CD4-positive, alpha-beta T cell (primary cell): ENCODE measurements at regions of chr10 and their contacts with region 1.

Region 1: DNA sequence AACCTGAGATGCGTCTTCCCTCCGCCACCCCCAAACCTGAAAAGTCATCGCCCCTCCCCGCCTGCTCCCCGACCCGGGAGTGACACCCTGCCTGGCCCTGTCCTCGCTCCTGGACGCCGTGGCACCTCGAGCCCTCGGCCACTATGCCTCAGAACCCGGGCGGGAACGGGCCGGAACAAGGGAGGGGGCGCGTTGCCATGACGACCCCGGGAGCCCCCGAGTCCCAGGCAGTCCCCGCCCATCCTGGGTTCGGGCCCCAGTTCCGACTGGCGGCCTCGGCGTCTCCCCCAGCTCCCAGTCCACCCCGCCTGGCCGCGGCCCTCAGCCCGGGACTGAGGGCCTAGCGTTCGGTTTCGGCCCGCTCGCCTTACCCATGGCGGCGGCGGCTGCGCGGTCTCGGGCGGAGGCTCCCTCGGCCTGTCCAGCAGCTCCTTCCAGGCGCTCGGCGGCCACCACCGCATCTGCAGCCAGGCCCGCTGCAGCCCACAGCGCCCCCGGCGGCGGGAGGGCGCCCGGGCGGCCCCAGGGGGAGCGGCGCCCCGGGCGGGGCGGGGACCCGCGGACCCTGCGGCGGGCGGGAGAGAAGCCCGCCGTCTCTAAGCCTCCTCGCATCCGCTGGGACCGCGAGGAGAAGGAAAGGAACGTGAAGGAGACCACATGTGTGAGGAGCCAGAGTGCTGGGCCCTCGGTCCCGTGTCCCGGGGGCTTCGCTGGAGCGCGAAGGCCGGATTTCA is at the start of gene RUFY2:
- DNase-seq: peak; percentile 42 to 88 (median 70)
- ATAC-seq: peak; percentile 94
- H3K4me3 ChIP-seq: peak within 1 kb of the TSS; percentile 99
- H3K4me3 Mint-ChIP-seq: peak within 1 kb of the TSS; percentile 89
- H3K27ac ChIP-seq: peak within 1 kb of the TSS in 1 of 2 donors; percentile 35
- H3K27ac Mint-ChIP-seq: peak within 1 kb of the TSS; percentile 53
- H3K4me1 ChIP-seq: peaks cover 11% of the 10 kb centered on the region
- H3K4me1 Mint-ChIP-seq: peaks cover 18% of the 10 kb centered on the region
- H3K27me3 ChIP-seq: no peaks in the 10 kb centered on the region
- H3K27me3 Mint-ChIP-seq: no peaks in the 10 kb centered on the region
- CTCF ChIP-seq: peak; percentile 57
- total RNA-seq, gene RUFY2: 10.7 to 14.8 TPM

Region 2: GRCh38 chr10:68385740-68386139 is 21.2 kb before region 1 on chr10:
- CTCF ChIA-PET with region 1: interaction called, 11 read pairs
- POLR2A ChIA-PET with region 1: no interaction called
- intact Hi-C with region 1: no loop called
- DNase-seq: no peak
- ATAC-seq: no peak
- H3K4me3 ChIP-seq: no peak overlapping the region
- H3K4me3 Mint-ChIP-seq: no peak overlapping the region
- H3K27ac ChIP-seq: no peak overlapping the region
- H3K27ac Mint-ChIP-seq: no peak overlapping the region
- H3K4me1 ChIP-seq: no peaks in the 10 kb centered on the region
- H3K4me1 Mint-ChIP-seq: no peaks in the 10 kb centered on the region
- H3K27me3 ChIP-seq: no peaks in the 10 kb centered on the region
- H3K27me3 Mint-ChIP-seq: no peaks in the 10 kb centered on the region
- CTCF ChIP-seq: no peak

Region 3: DNA sequence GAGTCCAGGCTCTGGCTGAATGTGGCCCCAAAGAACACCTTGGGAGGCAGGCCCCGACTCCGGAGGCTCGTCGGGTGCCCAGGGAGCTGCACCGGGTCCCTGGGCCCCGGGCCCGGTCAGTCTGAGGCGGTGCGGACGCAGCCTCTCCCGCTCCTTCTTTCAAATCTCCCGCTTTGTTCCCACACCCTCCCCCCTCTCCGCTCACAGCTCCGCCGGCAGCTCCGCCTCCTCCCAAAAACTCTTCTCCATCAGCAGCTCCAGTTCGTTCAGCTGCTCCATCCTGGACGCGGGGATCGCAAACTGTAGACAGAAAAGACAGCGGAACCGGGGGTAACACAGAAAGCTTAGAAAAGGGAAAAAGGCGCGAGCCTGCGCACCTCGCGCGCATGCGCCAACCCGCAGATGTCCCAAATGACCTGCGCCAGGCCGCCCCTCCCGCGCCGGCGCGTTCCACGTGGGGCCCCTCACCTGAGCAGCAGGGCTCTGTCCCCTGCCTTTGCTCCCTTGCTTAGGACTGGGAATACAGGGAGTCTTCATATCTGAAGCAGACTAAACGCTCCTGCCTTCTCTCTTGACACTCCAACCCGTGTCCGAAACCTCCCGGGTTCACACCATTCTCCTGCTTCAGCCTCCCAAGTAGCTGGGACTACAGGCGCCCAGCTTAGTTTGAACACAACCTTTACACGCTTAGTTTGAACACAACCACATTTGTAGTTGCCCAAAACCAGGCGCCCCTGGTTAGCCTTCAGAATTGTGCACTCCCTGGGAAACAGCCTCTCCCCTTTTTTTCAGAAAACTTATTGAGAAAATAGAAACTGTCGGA is 64.8 kb after region 1 on chr10 and contains the start of gene DNA2:
- CTCF ChIA-PET with region 1: interaction called, 3 read pairs
- POLR2A ChIA-PET with region 1: no interaction called
- intact Hi-C with region 1: loop called in 1 of 2 experiments (anchors 5 kb)
- DNase-seq: peak; percentile 34 to 86 (median 62)
- ATAC-seq: peak; percentile 85
- H3K4me3 ChIP-seq: peak within 1 kb of the TSS; percentile 91
- H3K4me3 Mint-ChIP-seq: peak within 1 kb of the TSS; percentile 99
- H3K27ac ChIP-seq: peak within 1 kb of the TSS in 1 of 2 donors; percentile 14
- H3K27ac Mint-ChIP-seq: peak within 1 kb of the TSS; percentile 56
- H3K4me1 ChIP-seq: peaks cover 15% of the 10 kb centered on the region
- H3K4me1 Mint-ChIP-seq: peaks cover 17% of the 10 kb centered on the region
- H3K27me3 ChIP-seq: no peaks in the 10 kb centered on the region
- H3K27me3 Mint-ChIP-seq: no peaks in the 10 kb centered on the region
- CTCF ChIP-seq: no peak
- total RNA-seq, gene DNA2: 3.7 to 5.7 TPM

Region 4: GRCh38 chr10:68526626-68527307 is 119.8 kb after region 1 on chr10:
- CTCF ChIA-PET with region 1: no interaction called
- POLR2A ChIA-PET with region 1: no interaction called
- intact Hi-C with region 1: loop called in 1 of 2 experiments (anchors 5 kb)
- DNase-seq: no peak
- ATAC-seq: peak; percentile 10
- H3K4me3 ChIP-seq: peak overlapping the region; percentile 68
- H3K4me3 Mint-ChIP-seq: peak overlapping the region; percentile 88
- H3K27ac ChIP-seq: peak overlapping the region; percentile 82 to 90
- H3K27ac Mint-ChIP-seq: peak overlapping the region; percentile 96
- H3K4me1 ChIP-seq: peaks cover 16% of the 10 kb centered on the region
- H3K4me1 Mint-ChIP-seq: peaks cover 13% of the 10 kb centered on the region
- H3K27me3 ChIP-seq: no peaks in the 10 kb centered on the region
- H3K27me3 Mint-ChIP-seq: no peaks in the 10 kb centered on the region
- CTCF ChIP-seq: no peak

Region 5: GRCh38 chr10:68720793-68721672 is 314.1 kb after region 1 on chr10 and contains the start of gene CCAR1:
- CTCF ChIA-PET with region 1: no interaction called
- POLR2A ChIA-PET with region 1: no interaction called
- intact Hi-C with region 1: loop called in 1 of 2 experiments (anchors 5 kb)
- DNase-seq: peak; percentile 92 to 99 (median 96)
- ATAC-seq: peak; percentile 94
- H3K4me3 ChIP-seq: peak within 1 kb of the TSS; percentile 93
- H3K4me3 Mint-ChIP-seq: peak within 1 kb of the TSS; percentile 100
- H3K27ac ChIP-seq: peak within 1 kb of the TSS; percentile 85 to 89
- H3K27ac Mint-ChIP-seq: peak within 1 kb of the TSS; percentile 98
- H3K4me1 ChIP-seq: peaks cover 16% of the 10 kb centered on the region
- H3K4me1 Mint-ChIP-seq: peaks cover 16% of the 10 kb centered on the region
- H3K27me3 ChIP-seq: no peaks in the 10 kb centered on the region
- H3K27me3 Mint-ChIP-seq: no peaks in the 10 kb centered on the region
- CTCF ChIP-seq: no peak
- total RNA-seq, gene CCAR1: 68.9 to 82.2 TPM